Common myeloid progenitor, CD34-positive (primary cell): ENCODE measurements at regions of chr6 and their contacts with region 1.

Region 1: GRCh38 chr6:41367700-41368099 is 32.3 kb downstream of the NCR2 start:
- DNase-seq: peak; percentile 48 to 58 (median 56)
- H3K4me3 ChIP-seq: no peak overlapping the region
- H3K27ac ChIP-seq: no peak overlapping the region
- H3K4me1 ChIP-seq: peaks cover 0 to 20% (median 17%) of the 10 kb centered on the region in 4 experiments
- H3K27me3 ChIP-seq: peaks cover 9 to 70% (median 24%) of the 10 kb centered on the region in 5 experiments

Region 2: GRCh38 chr6:41080621-41081020 is 287.1 kb before region 1 on chr6:
- CTCF ChIA-PET with region 1: no interaction called
- POLR2A ChIA-PET with region 1: no interaction called
- DNase-seq: no peak
- H3K4me3 ChIP-seq: no peak overlapping the region
- H3K27ac ChIP-seq: no peak overlapping the region
- H3K4me1 ChIP-seq: peaks cover 5 to 11% (median 6%) of the 10 kb centered on the region in 4 experiments
- H3K27me3 ChIP-seq: no peaks in the 10 kb centered on the region

Region 3: DNA sequence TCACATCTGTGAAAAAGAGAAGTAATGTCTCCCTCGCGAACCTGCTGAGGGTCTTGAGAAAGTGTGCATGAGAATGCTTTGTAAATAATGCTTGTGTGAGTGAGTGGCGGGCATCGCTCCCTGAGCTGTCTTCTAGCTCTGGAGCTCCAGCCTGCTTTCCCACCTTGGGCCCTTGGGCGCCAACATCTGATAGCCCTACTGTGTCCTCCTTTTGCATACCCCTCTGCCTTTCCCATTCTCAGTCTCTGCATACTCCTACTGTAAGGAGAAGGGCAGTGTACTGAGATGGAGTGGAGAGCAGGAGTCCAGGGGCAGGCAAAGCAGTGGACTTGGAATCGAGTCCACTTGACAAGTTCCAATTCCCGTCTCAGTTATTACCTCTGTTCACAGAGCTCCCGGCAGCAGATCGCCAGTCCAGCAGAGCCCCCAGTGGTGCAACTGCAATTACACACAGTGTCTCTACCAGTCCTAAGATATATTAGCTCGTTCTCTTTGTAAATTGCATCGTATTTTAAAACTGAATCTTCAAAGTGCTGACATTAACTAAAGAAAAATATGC is 33.1 kb before region 1 on chr6:
- CTCF ChIA-PET with region 1: interaction called, 19 read pairs
- POLR2A ChIA-PET with region 1: no interaction called
- DNase-seq: peak; percentile 8 to 30 (median 25)
- H3K4me3 ChIP-seq: no peak overlapping the region
- H3K27ac ChIP-seq: no peak overlapping the region
- H3K4me1 ChIP-seq: peaks cover 0 to 56% (median 22%) of the 10 kb centered on the region in 4 experiments
- H3K27me3 ChIP-seq: no peaks in the 10 kb centered on the region

Region 4: GRCh38 chr6:41413250-41413649 is 45.5 kb after region 1 on chr6:
- CTCF ChIA-PET with region 1: interaction called, 10 read pairs
- POLR2A ChIA-PET with region 1: no interaction called
- DNase-seq: no peak
- H3K4me3 ChIP-seq: no peak overlapping the region
- H3K27ac ChIP-seq: no peak overlapping the region
- H3K4me1 ChIP-seq: no peaks in the 10 kb centered on the region
- H3K27me3 ChIP-seq: peaks cover 0 to 31% (median 7%) of the 10 kb centered on the region in 5 experiments

Region 5: DNA sequence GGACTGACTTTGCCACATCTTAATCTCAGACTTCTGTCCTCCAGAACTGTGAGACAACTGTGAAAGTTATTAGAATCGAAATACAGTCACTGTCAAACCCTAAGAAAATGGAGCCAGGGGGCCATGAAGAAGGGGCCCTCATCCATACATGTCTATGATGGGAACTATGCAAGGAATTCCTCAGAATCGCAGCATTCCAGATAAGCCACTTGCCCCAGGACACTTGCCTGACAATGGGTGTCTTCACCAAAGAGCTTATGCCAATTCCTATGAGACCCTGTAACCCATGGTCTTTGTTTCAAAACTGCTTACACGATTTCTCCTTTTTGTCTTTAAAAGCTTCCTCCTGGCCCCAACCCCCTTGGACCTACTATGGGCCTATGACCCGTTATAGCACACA is 88.1 kb after region 1 on chr6:
- CTCF ChIA-PET with region 1: interaction called, 16 read pairs
- POLR2A ChIA-PET with region 1: no interaction called
- DNase-seq: no peak
- H3K4me3 ChIP-seq: no peak overlapping the region
- H3K27ac ChIP-seq: no peak overlapping the region
- H3K4me1 ChIP-seq: no peaks in the 10 kb centered on the region
- H3K27me3 ChIP-seq: peaks cover 0 to 7% (median 2%) of the 10 kb centered on the region in 5 experiments

Region 6: DNA sequence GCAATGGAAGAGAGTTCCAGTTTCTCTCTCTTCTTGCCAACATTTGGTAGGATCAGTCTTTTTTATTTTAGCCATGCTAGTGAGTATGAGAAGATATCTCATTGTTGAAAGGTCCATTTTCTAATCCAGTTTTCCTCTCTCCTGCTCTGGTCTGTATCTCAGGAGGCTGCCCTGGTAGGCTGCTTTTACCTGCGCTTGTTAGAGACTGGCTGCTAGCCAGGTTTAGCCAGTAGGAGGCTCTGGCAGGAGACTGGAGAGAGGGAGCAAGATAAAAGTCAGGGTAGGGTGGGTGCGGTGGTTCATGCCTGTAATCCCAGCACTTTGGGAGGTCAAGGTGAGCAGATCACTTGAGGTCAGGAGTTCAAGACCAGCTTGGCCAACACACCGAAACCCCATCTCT is 109.9 kb after region 1 on chr6:
- CTCF ChIA-PET with region 1: no interaction called
- POLR2A ChIA-PET with region 1: no interaction called
- DNase-seq: no peak
- H3K4me3 ChIP-seq: no peak overlapping the region
- H3K27ac ChIP-seq: no peak overlapping the region
- H3K4me1 ChIP-seq: no peaks in the 10 kb centered on the region
- H3K27me3 ChIP-seq: peaks cover 0 to 30% (median 3%) of the 10 kb centered on the region in 5 experiments

Region 7: DNA sequence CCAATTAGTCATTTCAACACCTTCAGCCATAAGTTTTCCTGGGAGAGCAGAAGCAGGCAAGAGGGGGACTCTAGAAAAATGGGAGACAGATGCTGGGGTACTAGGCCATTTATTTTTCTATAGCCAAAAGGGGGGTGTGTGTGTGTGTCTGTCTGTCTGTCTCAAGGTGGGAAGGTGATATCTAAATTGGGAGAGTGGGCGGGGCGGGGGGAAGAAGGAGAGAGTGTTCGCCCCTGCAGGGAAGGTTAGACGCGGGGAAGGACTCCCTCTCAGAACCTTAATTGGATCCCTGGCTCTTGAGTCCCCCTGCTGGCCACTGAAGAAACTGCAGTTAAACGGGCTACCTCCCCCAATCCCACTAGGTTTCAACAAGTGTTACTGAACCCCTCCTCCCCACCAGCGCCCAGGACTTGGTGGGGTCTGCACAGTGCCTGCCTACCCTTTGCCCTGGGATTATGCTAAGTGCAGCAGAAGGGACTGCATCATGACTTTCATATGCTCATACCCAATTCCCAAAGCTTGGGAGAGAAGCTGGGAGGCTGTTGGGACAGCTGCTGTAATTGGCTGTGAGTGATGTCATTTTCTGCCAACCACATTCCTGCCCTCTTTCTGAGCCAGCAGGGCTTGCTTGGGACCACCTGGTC is 224.3 kb after region 1 on chr6:
- CTCF ChIA-PET with region 1: interaction called, 18 read pairs
- POLR2A ChIA-PET with region 1: no interaction called
- DNase-seq: peak; percentile 65 to 80 (median 73)
- H3K4me3 ChIP-seq: no peak overlapping the region
- H3K27ac ChIP-seq: no peak overlapping the region
- H3K4me1 ChIP-seq: no peaks in the 10 kb centered on the region
- H3K27me3 ChIP-seq: no peaks in the 10 kb centered on the region

Region 8: GRCh38 chr6:41602864-41603608 is 235.3 kb after region 1 on chr6:
- CTCF ChIA-PET with region 1: interaction called, 12 read pairs
- POLR2A ChIA-PET with region 1: no interaction called
- DNase-seq: peak; percentile 89 to 92 (median 92)
- H3K4me3 ChIP-seq: peak overlapping the region in 5 of 7 experiments; percentile 2 to 54 (median 35)
- H3K27ac ChIP-seq: no peak overlapping the region
- H3K4me1 ChIP-seq: peaks cover 0 to 7% (median 5%) of the 10 kb centered on the region in 4 experiments
- H3K27me3 ChIP-seq: no peaks in the 10 kb centered on the region